Ovary (tissue), 10 donors: ENCODE measurements at regions of chr10 and their contacts with region 1.

Region 1: GRCh38 chr10:15370856-15371701 is at the start of gene FAM171A1:
- DNase-seq: peak; percentile 45 to 74 (median 68)
- H3K4me3 ChIP-seq: peak within 1 kb of the TSS; percentile 60
- H3K27ac ChIP-seq: peak within 1 kb of the TSS; percentile 45 to 73
- H3K4me1 ChIP-seq: peaks cover 2% of the 10 kb centered on the region
- H3K27me3 ChIP-seq: no peaks in the 10 kb centered on the region
- CTCF ChIP-seq: peak in 1 of 3 donors; percentile 30
- EP300 ChIP-seq: no peak
- POLR2A ChIP-seq: no peak
- total RNA-seq, gene FAM171A1: 9.1 to 29.1 (median 23.9) TPM

Region 2: GRCh38 chr10:15088428-15089261 is 282.4 kb before region 1 on chr10 and contains the start of gene ACBD7:
- intact Hi-C with region 1: loop called in 1 of 4 experiments (anchors 10 kb)
- DNase-seq: peak; percentile 61 to 85 (median 77)
- H3K4me3 ChIP-seq: peak within 1 kb of the TSS; percentile 51
- H3K27ac ChIP-seq: no peak within 1 kb of the TSS
- H3K4me1 ChIP-seq: peaks cover 6% of the 10 kb centered on the region
- H3K27me3 ChIP-seq: no peaks in the 10 kb centered on the region
- CTCF ChIP-seq: peak; percentile 34 to 69 (median 57)
- EP300 ChIP-seq: no peak
- POLR2A ChIP-seq: no peak
- total RNA-seq, gene ACBD7: 0.17 to 1.7 (median 0.48) TPM in 6 of 7 donors, not detected in the other

Region 3: DNA sequence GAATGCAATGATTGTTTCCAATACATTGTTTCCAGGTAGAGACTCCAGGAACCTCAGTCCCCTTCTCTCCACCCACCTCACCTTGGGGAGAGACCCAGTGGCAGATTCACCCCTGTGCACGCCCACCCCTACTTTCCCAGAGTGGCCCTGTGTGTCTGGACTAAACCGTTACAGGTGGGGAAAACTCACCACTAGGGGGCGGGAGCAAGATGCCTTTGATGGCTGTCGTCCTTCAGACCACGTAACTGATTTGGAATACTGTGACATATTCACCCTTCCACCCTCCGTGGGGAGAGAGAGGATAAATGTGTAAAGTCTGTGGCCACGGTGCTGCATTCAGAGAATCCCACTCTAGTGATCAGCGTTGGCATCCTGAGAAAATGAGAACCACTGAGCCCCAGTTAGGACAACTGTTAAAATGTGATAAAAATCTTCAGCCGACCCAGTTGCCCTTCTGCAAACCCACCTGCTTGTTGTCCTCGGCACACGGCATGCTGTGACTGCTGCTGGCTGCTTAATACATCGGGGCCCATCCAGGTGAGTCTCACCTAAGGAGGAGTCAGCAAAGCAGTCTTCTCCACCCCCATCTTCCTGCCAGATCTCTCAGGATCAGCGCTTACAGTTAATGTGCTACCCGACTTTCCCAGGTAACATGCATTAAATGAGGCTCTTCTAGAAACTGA is 161.1 kb before region 1 on chr10:
- intact Hi-C with region 1: loop called in 3 of 4 experiments (anchors 5 kb)
- DNase-seq: peak; percentile 66 to 84 (median 75)
- H3K4me3 ChIP-seq: no peak overlapping the region
- H3K27ac ChIP-seq: no peak overlapping the region
- H3K4me1 ChIP-seq: peaks cover 2% of the 10 kb centered on the region
- H3K27me3 ChIP-seq: no peaks in the 10 kb centered on the region
- CTCF ChIP-seq: peak; percentile 47 to 62 (median 56)
- EP300 ChIP-seq: no peak
- POLR2A ChIP-seq: no peak

Region 4: DNA sequence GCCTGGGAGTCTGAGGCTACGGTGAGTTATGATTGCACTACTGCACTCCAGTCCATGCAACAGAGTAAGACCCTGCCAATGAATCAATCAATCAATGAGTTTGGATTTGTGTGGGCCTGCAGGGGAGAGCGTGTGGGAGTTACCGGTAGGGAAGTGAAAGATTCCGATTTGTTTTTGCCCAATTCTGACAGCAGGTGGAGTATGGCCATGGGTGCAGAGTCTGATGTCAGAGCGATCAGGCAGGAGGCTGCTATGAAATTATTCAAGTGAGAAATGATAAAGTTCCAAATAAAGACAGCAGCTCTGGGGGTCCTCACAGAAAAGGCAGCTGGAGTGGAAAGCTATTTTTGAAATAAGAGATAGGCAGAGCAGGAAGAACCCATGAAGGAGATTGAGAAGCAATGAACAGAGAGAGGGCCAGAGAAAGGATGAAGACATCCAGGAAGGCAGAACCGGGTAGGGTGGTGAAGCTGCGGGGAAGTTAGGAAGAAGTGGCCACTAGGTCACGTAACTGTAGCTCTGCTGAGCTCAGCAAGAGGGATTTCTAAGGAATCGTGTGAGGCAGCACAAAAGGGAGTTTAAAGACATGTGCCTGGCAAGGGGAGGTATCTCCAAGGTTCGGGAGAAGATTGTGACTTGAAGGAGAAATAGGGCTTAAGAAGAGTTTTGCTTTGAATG is 108.9 kb before region 1 on chr10:
- intact Hi-C with region 1: loop called in 1 of 4 experiments (anchors 10 kb)
- DNase-seq: no peak
- H3K4me3 ChIP-seq: no peak overlapping the region
- H3K27ac ChIP-seq: no peak overlapping the region
- H3K4me1 ChIP-seq: no peaks in the 10 kb centered on the region
- H3K27me3 ChIP-seq: no peaks in the 10 kb centered on the region
- CTCF ChIP-seq: no peak
- EP300 ChIP-seq: no peak
- POLR2A ChIP-seq: no peak